HCT116 (cell line): ENCODE measurements at regions of chr1 and their contacts with region 1.

Region 1: GRCh38 chr1:31745096-31745945 is 18.8 kb downstream of the ADGRB2 start:
- DNase-seq: no peak
- ATAC-seq: peak; percentile 95
- H3K4me3 ChIP-seq: no peak overlapping the region
- H3K27ac ChIP-seq: no peak overlapping the region
- H3K4me1 ChIP-seq: peaks cover 7 to 8% of the 10 kb centered on the region in 2 experiments; a peak in 3 of 4 replicates
- H3K27me3 ChIP-seq: no peaks in the 10 kb centered on the region
- CTCF ChIP-seq: peak; percentile 73 to 83 (median 80); a peak in 5 of 6 replicates
- POLR2A ChIP-seq: no peak
- RAD21 ChIP-seq: peak; percentile 82

Region 2: DNA sequence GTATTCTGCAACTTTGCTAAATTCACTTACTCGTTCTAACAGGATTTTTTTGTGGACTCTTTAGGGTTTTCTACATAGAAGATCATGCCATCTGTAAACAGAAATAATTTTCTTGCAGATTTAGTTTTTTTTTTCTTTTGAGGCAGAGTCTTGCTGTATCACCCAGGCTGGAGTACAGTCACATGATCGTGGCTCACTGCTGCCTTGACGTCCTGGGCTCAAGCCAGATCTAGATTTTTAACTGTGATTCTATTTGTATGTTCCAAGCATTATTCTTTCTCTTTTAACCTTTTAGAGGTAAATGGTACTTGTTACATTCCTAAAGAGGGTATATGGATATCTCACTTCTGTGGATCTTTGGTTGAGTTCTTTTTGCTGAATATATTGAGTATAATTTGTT is 391.0 kb before region 1 on chr1:
- CTCF ChIA-PET with region 1: no interaction called
- POLR2A ChIA-PET with region 1: no interaction called
- RAD21 ChIA-PET with region 1: no interaction called
- intact Hi-C with region 1: no loop called
- DNase-seq: no peak
- ATAC-seq: no peak
- H3K4me3 ChIP-seq: no peak overlapping the region
- H3K27ac ChIP-seq: no peak overlapping the region
- H3K4me1 ChIP-seq: no peaks in the 10 kb centered on the region
- H3K27me3 ChIP-seq: no peaks in the 10 kb centered on the region
- CTCF ChIP-seq: no peak
- POLR2A ChIP-seq: no peak
- RAD21 ChIP-seq: no peak

Region 3: DNA sequence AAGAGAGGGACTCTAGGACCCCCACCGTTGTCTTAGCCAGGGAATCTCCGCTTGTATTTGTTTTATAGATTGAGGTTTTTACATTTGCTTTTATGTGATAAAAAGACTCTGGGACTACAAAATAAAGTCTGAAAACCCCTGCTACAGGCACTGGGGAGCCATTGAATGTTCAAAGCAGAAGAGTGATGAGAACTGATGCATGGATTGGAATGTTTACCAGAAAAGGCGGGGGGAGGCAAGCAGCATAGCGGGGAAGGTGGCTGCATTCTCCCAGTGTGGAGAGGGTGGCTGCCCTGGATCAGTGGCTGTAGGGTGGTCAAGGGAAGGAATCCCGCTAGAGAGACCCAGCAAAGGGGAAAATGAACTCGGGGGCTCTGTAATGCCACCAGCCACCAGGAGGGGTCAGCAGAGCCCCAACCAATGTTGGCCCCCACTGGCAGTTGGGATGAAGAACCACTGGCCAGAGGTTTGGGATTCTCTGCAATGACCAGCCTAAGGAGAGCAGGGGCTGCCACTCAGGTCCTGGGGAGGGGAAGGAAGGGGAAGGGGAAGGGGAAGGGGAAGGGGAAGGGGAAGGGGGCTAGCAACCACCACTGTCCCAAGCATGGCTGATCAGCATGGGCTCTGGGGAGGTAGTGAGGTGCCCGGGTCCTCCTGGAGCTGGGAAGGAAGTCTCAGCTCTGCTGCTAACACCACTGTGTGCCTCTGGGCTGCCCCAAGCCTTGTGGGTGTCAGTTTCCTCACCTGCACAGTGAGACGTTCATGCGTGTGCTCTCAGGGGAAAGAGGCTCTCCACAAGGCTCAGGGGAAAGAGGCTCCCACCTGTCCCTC is 81.5 kb before region 1 on chr1:
- CTCF ChIA-PET with region 1: interaction called, 17 read pairs
- POLR2A ChIA-PET with region 1: interaction called, 4 read pairs
- RAD21 ChIA-PET with region 1: interaction called, 4 to 10 read pairs
- intact Hi-C with region 1: loop called (anchors 1 kb)
- DNase-seq: peak; percentile 13
- ATAC-seq: peak; percentile 79
- H3K4me3 ChIP-seq: no peak overlapping the region
- H3K27ac ChIP-seq: no peak overlapping the region
- H3K4me1 ChIP-seq: peaks cover 9 to 12% of the 10 kb centered on the region in 2 experiments
- H3K27me3 ChIP-seq: no peaks in the 10 kb centered on the region
- CTCF ChIP-seq: peak; percentile 90 to 95 (median 93)
- POLR2A ChIP-seq: no peak
- RAD21 ChIP-seq: peak; percentile 98